GM10248 (cell line): ENCODE measurements at regions of chr14 and their contacts with region 1.

Region 1: GRCh38 chr14:65206448-65207096 is 104.3 kb upstream of the MAX start:
- DNase-seq: peak; percentile 65
- CTCF ChIP-seq: no peak

Region 2: GRCh38 chr14:65170768-65171507 is 35.6 kb before region 1 on chr14:
- CTCF ChIA-PET with region 1: interaction called, 6 read pairs
- POLR2A ChIA-PET with region 1: interaction called, 11 read pairs
- DNase-seq: no peak
- CTCF ChIP-seq: peak; percentile 56

Region 3: GRCh38 chr14:65195042-65195719 is 11.4 kb before region 1 on chr14:
- CTCF ChIA-PET with region 1: interaction called, 22 read pairs
- POLR2A ChIA-PET with region 1: no interaction called
- DNase-seq: peak; percentile 60
- CTCF ChIP-seq: no peak

Region 4: GRCh38 chr14:65222440-65222858 is 15.9 kb after region 1 on chr14:
- CTCF ChIA-PET with region 1: interaction called, 12 read pairs
- POLR2A ChIA-PET with region 1: interaction called, 4 read pairs
- DNase-seq: peak; percentile 68
- CTCF ChIP-seq: peak; percentile 87

Region 5: DNA sequence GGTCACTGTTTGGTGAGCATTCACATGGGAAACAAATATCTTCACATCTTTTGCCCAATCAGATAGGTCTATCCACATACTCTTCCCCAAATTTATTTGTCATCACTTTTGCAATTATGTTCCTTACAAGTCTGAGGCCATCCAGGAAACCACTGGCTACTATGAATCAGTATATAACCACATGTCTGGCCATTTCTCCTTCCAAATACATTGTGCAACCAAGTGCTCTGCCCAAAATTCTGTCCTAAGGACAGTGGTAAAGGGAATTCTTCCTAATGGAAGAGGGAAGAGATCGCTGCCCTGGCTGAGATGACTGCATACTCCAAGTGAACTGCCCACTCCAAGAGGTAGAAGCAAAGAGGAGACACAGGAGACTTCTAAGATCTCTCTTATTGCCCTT is 44.6 kb after region 1 on chr14:
- CTCF ChIA-PET with region 1: no interaction called
- POLR2A ChIA-PET with region 1: no interaction called
- DNase-seq: no peak
- CTCF ChIP-seq: no peak

Region 6: DNA sequence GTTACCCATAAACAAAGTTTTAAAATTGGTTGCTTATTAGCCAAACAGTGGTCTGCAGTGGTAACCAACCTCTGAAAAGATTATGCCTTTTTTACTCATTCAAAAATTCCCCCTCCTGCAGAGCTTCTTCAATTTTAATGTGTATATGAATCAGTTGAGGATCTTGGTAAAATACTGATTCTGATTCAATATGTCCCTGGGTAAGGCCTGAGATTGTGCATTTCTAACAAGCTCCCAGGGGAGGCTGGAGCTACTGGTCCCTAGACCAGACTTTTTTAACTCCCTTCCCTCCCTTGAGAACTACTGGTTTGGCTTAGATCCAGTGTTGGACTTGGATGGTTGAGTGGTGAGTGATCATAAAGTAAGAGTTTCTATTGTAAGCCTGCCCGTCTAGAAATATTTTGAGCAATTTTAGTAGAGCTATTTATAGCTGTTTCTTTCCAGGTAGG is 296.1 kb after region 1 on chr14:
- CTCF ChIA-PET with region 1: no interaction called
- POLR2A ChIA-PET with region 1: no interaction called
- DNase-seq: no peak
- CTCF ChIP-seq: no peak